Ascending aorta (tissue), 2 donors: ENCODE measurements at regions of chr5 and their contacts with region 1.

Region 1: GRCh38 chr5:146426853-146427618 is 20.1 kb upstream of the TCERG1 start:
- DNase-seq: no peak
- H3K4me3 ChIP-seq: no peak overlapping the region
- H3K27ac ChIP-seq: no peak overlapping the region
- H3K4me1 ChIP-seq: no peaks in the 10 kb centered on the region
- H3K27me3 ChIP-seq: no peaks in the 10 kb centered on the region
- CTCF ChIP-seq: peak; percentile 27 to 73 (median 57)

Region 2: DNA sequence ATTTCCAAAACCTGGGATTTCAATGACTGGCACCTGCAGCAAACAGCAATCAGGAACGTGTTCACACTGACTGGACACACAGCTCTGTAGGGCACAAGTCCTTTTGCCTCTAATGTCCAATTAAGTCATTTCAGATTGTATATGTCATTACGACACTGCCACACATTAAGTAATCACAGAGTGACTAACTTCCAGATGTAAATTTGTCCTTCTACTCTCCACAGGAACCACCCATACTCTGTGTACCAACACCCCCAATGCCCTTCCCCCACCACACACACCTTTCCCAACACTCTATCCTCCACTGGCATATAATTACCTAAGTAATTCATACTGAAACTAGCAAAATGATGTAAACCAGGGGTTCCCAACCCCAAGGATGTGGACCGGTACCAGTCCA is 275.1 kb before region 1 on chr5:
- intact Hi-C with region 1: loop called (anchors 10 kb)
- DNase-seq: no peak
- H3K4me3 ChIP-seq: no peak overlapping the region
- H3K27ac ChIP-seq: no peak overlapping the region
- H3K4me1 ChIP-seq: no peaks in the 10 kb centered on the region
- H3K27me3 ChIP-seq: no peaks in the 10 kb centered on the region
- CTCF ChIP-seq: no peak

Region 3: GRCh38 chr5:146179696-146180095 is 247.3 kb before region 1 on chr5:
- intact Hi-C with region 1: loop called (anchors 5 kb)
- DNase-seq: no peak
- H3K4me3 ChIP-seq: no peak overlapping the region
- H3K27ac ChIP-seq: no peak overlapping the region
- H3K4me1 ChIP-seq: peaks cover 0 to 5% of the 10 kb centered on the region in 2 donors
- H3K27me3 ChIP-seq: no peaks in the 10 kb centered on the region
- CTCF ChIP-seq: no peak

Region 4: GRCh38 chr5:146291421-146292074 is 135.5 kb before region 1 on chr5:
- intact Hi-C with region 1: loop called (anchors 2 kb)
- DNase-seq: no peak
- H3K4me3 ChIP-seq: no peak overlapping the region
- H3K27ac ChIP-seq: no peak overlapping the region
- H3K4me1 ChIP-seq: no peaks in the 10 kb centered on the region
- H3K27me3 ChIP-seq: no peaks in the 10 kb centered on the region
- CTCF ChIP-seq: peak in 2 of 3 experiments; percentile 41 to 46